AG04450 (cell line): ENCODE measurements at regions of chr2 and their contacts with region 1.

Region 1: GRCh38 chr2:27303093-27304025 is 4.9 kb downstream of the UCN start:
- DNase-seq: no peak
- H3K4me3 ChIP-seq: no peak overlapping the region
- H3K27ac ChIP-seq: no peak overlapping the region
- H3K27me3 ChIP-seq: peaks cover 33% of the 10 kb centered on the region
- CTCF ChIP-seq: peak; percentile 89

Region 2: DNA sequence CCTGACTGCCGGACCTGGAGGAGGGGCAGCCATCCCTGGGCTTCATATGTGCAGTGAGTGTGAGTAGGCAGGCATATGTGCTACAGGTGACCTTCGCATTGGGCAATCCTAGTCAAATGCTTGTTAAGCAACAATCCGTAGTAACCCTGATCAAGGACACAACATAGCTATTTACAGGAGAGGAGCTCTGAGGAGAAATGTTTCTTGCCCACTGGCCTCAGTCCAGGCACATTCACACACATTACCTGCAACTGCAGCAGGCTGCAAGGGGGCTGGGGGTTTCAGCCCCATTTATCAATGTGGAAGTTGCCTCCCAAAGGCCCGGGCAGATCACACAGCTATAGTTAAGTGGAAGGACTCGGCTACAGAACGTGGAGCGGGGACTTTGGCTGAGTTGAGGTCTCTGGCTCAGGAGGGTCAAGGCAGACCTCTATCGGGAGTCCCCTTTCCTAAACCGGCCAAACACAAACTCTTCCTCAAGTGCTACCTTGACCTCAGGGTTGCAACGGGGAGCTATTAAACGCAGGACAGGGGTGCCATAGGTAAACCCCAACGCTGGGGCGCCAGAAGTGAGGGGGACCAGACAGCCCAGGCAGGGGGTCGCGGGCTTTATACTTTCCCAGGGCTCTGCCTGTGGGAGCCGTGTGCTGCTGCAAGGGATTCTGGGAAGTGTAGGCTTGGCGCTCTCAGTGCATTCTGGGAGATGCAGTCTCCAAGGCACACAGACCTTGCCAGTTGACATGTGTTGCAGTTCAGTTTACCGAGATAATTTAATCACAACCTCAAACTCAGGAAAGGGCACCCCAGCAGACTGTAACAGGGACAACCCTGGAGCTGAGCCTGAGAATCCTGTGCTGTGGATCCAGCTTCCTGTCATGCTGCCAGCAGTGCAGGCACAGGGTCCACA is 207.4 kb before region 1 on chr2:
- CTCF ChIA-PET with region 1: interaction called, 56 read pairs
- POLR2A ChIA-PET with region 1: no interaction called
- DNase-seq: no peak
- H3K4me3 ChIP-seq: peak overlapping the region; percentile 32
- H3K27ac ChIP-seq: no peak overlapping the region
- H3K27me3 ChIP-seq: no peaks in the 10 kb centered on the region
- CTCF ChIP-seq: no peak

Region 3: DNA sequence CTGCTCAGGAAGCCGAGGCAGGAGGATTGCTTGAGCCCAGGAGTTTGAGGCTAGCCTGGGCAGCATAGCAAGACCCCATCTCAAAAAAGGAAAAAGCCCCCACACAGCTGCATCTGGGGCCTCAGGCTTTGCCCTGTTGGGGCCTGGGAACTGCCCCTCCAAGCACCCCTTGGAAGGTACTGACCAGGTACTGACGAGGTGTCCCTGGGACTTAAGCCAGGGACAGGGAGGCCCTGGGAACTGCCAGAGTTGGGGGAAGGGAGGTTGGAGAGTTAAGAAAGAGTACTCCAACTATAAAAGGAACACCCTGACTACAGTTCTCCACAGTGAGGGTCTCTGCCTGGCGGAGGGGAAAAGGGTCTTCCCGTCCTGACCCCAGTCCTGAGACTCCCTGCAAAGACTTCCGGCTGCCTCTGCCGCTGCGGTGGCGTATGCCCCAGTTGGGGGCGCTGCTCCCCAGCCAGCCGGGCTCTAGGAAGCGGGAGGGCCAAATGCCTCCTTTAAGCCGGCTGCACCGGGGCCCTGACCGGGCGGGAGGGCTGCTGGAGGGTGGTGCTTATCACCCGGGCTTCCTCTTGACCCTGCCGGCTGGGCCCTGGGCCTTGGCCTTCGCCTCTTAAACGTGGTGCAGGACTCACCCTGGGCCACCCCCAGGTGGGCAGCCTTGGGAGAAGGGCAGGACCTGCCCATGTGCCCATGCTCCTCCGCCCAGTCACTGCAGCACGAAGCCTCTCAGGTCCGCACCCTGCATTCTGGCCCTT is 53.3 kb before region 1 on chr2:
- CTCF ChIA-PET with region 1: interaction called, 53 read pairs
- POLR2A ChIA-PET with region 1: interaction called, 3 read pairs
- DNase-seq: no peak
- H3K4me3 ChIP-seq: no peak overlapping the region
- H3K27ac ChIP-seq: no peak overlapping the region
- H3K27me3 ChIP-seq: peaks cover 15% of the 10 kb centered on the region
- CTCF ChIP-seq: peak; percentile 79

Region 4: DNA sequence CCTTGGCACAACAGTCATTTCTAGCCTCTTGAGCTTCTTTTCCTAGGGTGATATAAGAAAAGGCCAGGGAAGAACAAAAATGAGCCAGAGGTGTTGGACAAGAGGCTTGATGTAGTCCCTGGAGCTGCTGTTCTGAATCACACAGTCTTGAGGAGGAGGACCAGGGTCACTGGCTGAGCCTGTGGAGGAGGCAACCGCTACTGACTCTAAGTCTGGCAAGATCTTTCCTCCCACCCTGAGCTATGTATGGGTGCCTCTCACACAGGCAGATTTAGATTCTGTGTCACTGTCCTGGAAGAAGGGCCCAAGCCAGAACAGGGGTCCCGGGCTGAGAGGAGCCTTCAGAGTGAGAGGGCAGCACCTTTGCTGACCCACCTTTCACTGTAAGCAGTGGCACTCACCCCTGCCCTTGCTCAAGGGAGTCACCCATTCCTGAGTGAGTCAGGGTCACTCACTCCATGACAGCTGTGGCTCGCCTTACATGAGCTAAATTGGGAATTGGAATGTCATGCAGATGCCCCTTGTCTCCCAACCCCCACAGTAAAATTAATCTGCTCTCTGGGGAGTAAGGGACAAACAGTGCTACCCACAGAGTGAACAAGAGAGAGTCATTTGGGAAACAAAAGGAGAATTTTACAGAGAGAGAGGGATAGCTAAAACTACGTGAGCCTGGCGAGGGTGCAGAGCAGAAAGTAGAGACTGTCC is 21.4 kb before region 1 on chr2 and contains the start of gene TRIM54:
- CTCF ChIA-PET with region 1: interaction called, 87 read pairs
- POLR2A ChIA-PET with region 1: no interaction called
- DNase-seq: no peak
- H3K4me3 ChIP-seq: no peak within 1 kb of the TSS
- H3K27ac ChIP-seq: no peak within 1 kb of the TSS
- H3K27me3 ChIP-seq: peaks cover 4% of the 10 kb centered on the region
- CTCF ChIP-seq: no peak
- polyA plus RNA-seq, gene TRIM54: 0.05 TPM in 1 of 2 replicates, not detected in the other

Region 5: GRCh38 chr2:27316655-27317411 is 13.5 kb after region 1 on chr2:
- CTCF ChIA-PET with region 1: interaction called, 19 read pairs
- POLR2A ChIA-PET with region 1: no interaction called
- DNase-seq: no peak
- H3K4me3 ChIP-seq: no peak overlapping the region
- H3K27ac ChIP-seq: no peak overlapping the region
- H3K27me3 ChIP-seq: no peaks in the 10 kb centered on the region
- CTCF ChIP-seq: no peak